ENCODE measurements at regions of chr17 and their contacts with region 1.

Region 1: DNA sequence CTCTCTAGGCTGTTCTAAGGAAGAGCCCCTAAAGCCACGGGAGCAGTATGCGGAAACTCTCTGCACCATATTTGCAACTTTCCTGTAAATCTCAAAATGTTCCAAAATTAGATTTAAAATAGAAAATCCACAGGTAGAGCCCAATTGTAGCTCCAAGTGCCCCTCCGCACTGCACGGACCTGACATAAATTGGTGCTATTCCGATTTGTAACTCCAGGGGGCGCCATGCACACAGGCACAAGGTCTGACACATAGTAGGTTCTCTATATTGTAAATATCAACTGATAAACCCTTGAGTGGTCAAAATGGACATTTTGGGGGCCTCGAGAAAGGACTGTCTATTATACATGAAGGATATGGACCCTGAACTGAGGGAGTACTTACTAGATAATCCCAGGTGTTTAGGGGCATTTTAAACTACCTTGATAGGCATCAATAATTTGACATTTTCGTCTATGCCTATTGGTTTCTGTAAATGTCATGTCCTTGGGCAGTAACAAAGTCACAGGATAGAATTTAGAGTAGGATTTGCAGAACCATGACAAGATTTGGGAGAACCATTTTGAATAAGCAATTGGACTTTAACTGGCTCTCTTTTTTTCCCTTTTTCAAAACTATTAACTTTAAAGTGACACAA is 36.6 kb upstream of the TMEM132E start:
- DNase-seq: no peak
- ATAC-seq: no peak
- H3K4me3 ChIP-seq: no peak overlapping the region
- H3K27ac ChIP-seq: no peak overlapping the region
- H3K4me1 ChIP-seq: no peaks in the 10 kb centered on the region
- H3K27me3 ChIP-seq: no peaks in the 10 kb centered on the region

Region 2: GRCh38 chr17:34386697-34387550 is 155.9 kb before region 1 on chr17:
- intact Hi-C with region 1: no loop called
- DNase-seq: peak in 1 of 2 donors; percentile 70
- ATAC-seq: peak; percentile 37
- H3K4me3 ChIP-seq: no peak overlapping the region
- H3K27ac ChIP-seq: no peak overlapping the region
- H3K4me1 ChIP-seq: no peaks in the 10 kb centered on the region
- H3K27me3 ChIP-seq: no peaks in the 10 kb centered on the region

Region 3: DNA sequence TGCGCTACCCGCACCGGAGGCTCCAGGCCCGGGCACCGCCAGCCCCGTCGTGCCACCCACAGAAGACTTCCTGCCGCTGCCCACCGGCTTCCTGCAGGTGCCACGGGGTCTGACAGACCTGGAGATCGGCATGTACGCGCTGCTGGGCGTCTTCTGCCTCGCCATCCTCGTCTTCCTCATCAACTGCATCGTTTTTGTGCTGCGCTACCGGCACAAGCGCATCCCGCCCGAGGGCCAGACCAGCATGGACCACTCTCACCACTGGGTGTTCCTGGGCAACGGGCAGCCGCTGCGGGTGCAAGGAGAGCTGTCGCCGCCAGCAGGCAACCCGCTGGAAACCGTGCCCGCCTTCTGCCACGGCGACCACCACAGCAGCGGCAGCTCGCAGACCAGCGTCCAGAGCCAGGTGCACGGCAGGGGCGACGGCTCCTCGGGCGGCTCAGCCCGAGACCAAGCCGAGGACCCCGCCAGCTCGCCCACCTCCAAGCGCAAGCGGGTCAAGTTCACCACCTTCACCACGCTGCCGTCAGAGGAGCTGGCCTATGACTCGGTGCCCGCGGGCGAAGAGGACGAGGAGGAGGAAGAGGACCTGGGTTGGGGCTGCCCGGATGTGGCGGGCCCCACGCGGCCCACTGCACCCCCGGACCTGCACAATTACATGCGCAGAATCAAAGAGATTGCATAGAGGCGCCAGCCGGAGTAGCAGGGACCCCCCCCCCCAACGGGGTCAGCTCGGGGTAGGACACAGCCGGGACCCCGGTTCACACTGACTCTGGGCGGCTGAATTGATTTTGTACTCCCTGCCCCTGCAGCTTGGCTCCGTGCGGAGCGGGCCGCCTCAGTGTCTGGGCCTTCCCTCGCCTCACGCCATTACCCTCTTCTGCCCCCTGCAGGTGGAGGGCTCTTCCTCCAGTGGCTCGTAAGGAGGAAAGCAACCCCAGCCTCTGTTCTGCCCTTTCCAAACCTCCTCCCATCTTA is 95.0 kb after region 1 on chr17:
- intact Hi-C with region 1: loop called (anchors 10 kb)
- DNase-seq: peak; percentile 83 to 89
- ATAC-seq: peak; percentile 76
- H3K4me3 ChIP-seq: no peak overlapping the region
- H3K27ac ChIP-seq: no peak overlapping the region
- H3K4me1 ChIP-seq: no peaks in the 10 kb centered on the region
- H3K27me3 ChIP-seq: no peaks in the 10 kb centered on the region

Region 4: DNA sequence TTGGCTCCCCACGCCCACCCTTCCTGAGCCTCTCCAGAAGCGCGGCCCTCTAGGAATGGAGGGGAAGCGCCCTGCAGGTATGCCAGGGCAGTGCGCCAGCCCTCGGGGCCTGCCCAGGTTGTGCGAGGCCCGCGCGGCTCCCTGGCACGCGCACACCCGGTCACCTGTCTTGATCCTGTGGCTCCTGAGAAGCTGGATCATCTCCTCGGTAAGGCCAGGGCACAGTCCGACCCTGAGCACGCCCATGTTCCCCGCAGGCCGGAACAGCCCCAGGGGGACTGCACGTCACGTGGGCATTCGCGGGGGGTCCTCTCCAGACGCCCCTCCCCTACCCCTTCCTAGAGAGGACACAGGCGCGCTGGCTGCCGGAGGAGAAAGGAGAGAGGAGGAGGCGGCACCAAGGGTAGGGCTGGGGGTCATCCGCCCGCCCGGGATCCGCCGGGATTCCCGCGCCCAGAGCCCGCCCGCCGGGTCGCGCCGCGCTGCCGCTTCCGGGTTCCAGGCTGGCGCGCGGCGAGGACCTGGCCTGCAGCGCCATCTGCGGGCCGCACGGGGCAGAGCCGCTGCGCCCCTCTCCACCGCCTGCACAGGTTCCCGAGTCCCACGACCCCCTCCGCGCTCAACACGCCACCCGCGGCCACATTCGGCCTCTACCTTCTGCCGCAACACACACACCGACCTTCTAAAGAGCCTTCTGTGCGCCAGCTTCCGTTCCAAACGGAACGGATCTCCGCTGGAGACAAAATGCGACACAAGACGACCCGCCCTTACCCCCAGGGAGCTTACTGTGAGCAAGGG is 576.7 kb after region 1 on chr17 and contains the start of gene RAD51D:
- intact Hi-C with region 1: loop called (anchors 5 kb)
- DNase-seq: peak; percentile 80 to 92
- ATAC-seq: peak; percentile 95
- H3K4me3 ChIP-seq: peak within 1 kb of the TSS; percentile 64 to 75
- H3K27ac ChIP-seq: no peak within 1 kb of the TSS
- H3K4me1 ChIP-seq: no peaks in the 10 kb centered on the region
- H3K27me3 ChIP-seq: no peaks in the 10 kb centered on the region
- total RNA-seq, gene RAD51D: 14.8 to 17.3 TPM